CD4-positive, alpha-beta T cell (primary cell): ENCODE measurements at regions of chr5 and their contacts with region 1.

Region 1: DNA sequence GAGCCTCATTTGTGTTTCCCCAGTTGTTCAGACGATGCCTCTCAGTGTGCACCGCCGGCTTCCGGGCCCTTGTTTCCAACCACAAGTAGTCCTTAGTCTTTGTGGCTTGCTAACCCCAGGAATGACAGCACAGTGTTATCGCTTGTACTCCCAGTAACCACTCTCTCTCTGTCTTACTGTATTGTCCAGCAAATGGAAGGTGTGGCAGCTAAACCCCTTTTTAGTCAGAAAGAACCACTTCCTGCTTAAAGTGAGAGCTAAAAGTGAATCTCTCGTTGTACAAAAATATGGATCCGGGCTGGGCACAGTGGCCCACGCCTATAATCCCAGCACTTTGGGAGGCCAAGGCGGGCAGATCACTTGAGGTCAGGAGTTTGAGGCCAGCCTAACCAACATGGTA is 61.3 kb downstream of the ENC1 start:
- DNase-seq: peak; percentile 9 to 83 (median 36)
- ATAC-seq: peak; percentile 86
- H3K4me3 ChIP-seq: no peak overlapping the region
- H3K4me3 Mint-ChIP-seq: peak overlapping the region; percentile 70
- H3K27ac ChIP-seq: peak overlapping the region in 1 of 2 donors; percentile 5
- H3K27ac Mint-ChIP-seq: peak overlapping the region; percentile 81
- H3K4me1 ChIP-seq: peaks cover 31% of the 10 kb centered on the region
- H3K4me1 Mint-ChIP-seq: peaks cover 45% of the 10 kb centered on the region
- H3K27me3 ChIP-seq: no peaks in the 10 kb centered on the region
- H3K27me3 Mint-ChIP-seq: no peaks in the 10 kb centered on the region
- CTCF ChIP-seq: no peak

Region 2: DNA sequence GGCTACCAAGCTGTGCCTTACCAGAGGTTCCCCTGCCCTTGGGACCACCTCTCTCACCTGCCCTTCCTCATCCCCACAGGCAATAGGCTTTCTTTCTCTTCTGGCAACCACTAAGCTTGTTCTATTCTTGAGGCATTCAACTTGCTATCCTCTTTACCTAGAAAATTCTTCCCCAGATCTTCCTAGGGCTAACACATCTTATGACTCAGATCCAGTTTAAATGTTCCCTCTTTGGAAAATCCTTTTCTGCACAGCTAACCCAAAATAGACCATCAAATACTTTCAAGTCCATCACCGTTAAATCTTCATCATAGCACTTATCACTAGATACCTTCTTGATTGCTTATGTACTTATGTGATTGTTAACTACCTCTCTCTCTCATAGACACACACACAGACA is 32.4 kb before region 1 on chr5:
- CTCF ChIA-PET with region 1: no interaction called
- POLR2A ChIA-PET with region 1: no interaction called
- intact Hi-C with region 1: no loop called
- DNase-seq: no peak
- ATAC-seq: no peak
- H3K4me3 ChIP-seq: no peak overlapping the region
- H3K4me3 Mint-ChIP-seq: no peak overlapping the region
- H3K27ac ChIP-seq: no peak overlapping the region
- H3K27ac Mint-ChIP-seq: no peak overlapping the region
- H3K4me1 ChIP-seq: no peaks in the 10 kb centered on the region
- H3K4me1 Mint-ChIP-seq: peaks cover 6% of the 10 kb centered on the region
- H3K27me3 ChIP-seq: no peaks in the 10 kb centered on the region
- H3K27me3 Mint-ChIP-seq: no peaks in the 10 kb centered on the region
- CTCF ChIP-seq: no peak

Region 3: GRCh38 chr5:74560245-74560644 is 19.0 kb before region 1 on chr5:
- CTCF ChIA-PET with region 1: no interaction called
- POLR2A ChIA-PET with region 1: no interaction called
- intact Hi-C with region 1: loop called in 1 of 2 experiments (anchors 1 kb)
- DNase-seq: no peak
- ATAC-seq: no peak
- H3K4me3 ChIP-seq: no peak overlapping the region
- H3K4me3 Mint-ChIP-seq: no peak overlapping the region
- H3K27ac ChIP-seq: no peak overlapping the region
- H3K27ac Mint-ChIP-seq: no peak overlapping the region
- H3K4me1 ChIP-seq: no peaks in the 10 kb centered on the region
- H3K4me1 Mint-ChIP-seq: no peaks in the 10 kb centered on the region
- H3K27me3 ChIP-seq: no peaks in the 10 kb centered on the region
- H3K27me3 Mint-ChIP-seq: no peaks in the 10 kb centered on the region
- CTCF ChIP-seq: no peak

Region 4: GRCh38 chr5:74613283-74613682 is 34.1 kb after region 1 on chr5:
- CTCF ChIA-PET with region 1: no interaction called
- POLR2A ChIA-PET with region 1: no interaction called
- intact Hi-C with region 1: no loop called
- DNase-seq: peak in 2 of 14 experiments; percentile 16 to 17
- ATAC-seq: no peak
- H3K4me3 ChIP-seq: no peak overlapping the region
- H3K4me3 Mint-ChIP-seq: no peak overlapping the region
- H3K27ac ChIP-seq: no peak overlapping the region
- H3K27ac Mint-ChIP-seq: no peak overlapping the region
- H3K4me1 ChIP-seq: no peaks in the 10 kb centered on the region
- H3K4me1 Mint-ChIP-seq: no peaks in the 10 kb centered on the region
- H3K27me3 ChIP-seq: peaks cover 0 to 3% of the 10 kb centered on the region in 2 experiments
- H3K27me3 Mint-ChIP-seq: no peaks in the 10 kb centered on the region
- CTCF ChIP-seq: no peak

Region 5: GRCh38 chr5:74631081-74631953 is 52.1 kb after region 1 on chr5:
- CTCF ChIA-PET with region 1: no interaction called
- POLR2A ChIA-PET with region 1: interaction called, 3 read pairs
- intact Hi-C with region 1: loop called in 1 of 2 experiments (anchors 2 kb)
- DNase-seq: peak in 8 of 14 experiments; percentile 7 to 75 (median 46)
- ATAC-seq: peak; percentile 65
- H3K4me3 ChIP-seq: no peak overlapping the region
- H3K4me3 Mint-ChIP-seq: peak overlapping the region; percentile 73
- H3K27ac ChIP-seq: peak overlapping the region in 1 of 2 donors; percentile 52
- H3K27ac Mint-ChIP-seq: peak overlapping the region; percentile 86
- H3K4me1 ChIP-seq: peaks cover 9% of the 10 kb centered on the region
- H3K4me1 Mint-ChIP-seq: peaks cover 29% of the 10 kb centered on the region
- H3K27me3 ChIP-seq: no peaks in the 10 kb centered on the region
- H3K27me3 Mint-ChIP-seq: no peaks in the 10 kb centered on the region
- CTCF ChIP-seq: no peak

Region 6: GRCh38 chr5:74865804-74866595 is 286.8 kb after region 1 on chr5 and contains the start of gene FAM169A:
- CTCF ChIA-PET with region 1: no interaction called
- POLR2A ChIA-PET with region 1: no interaction called
- intact Hi-C with region 1: no loop called
- DNase-seq: peak; percentile 25 to 75 (median 47)
- ATAC-seq: peak; percentile 73
- H3K4me3 ChIP-seq: peak within 1 kb of the TSS; percentile 71
- H3K4me3 Mint-ChIP-seq: peak within 1 kb of the TSS; percentile 94
- H3K27ac ChIP-seq: no peak within 1 kb of the TSS
- H3K27ac Mint-ChIP-seq: peak within 1 kb of the TSS; percentile 89
- H3K4me1 ChIP-seq: peaks cover 15% of the 10 kb centered on the region
- H3K4me1 Mint-ChIP-seq: peaks cover 51% of the 10 kb centered on the region
- H3K27me3 ChIP-seq: peaks cover 0 to 7% of the 10 kb centered on the region in 2 experiments
- H3K27me3 Mint-ChIP-seq: peaks cover 5% of the 10 kb centered on the region
- CTCF ChIP-seq: no peak
- total RNA-seq, gene FAM169A: 13.3 to 14.7 TPM